Activated naive CD4-positive, alpha-beta T cell treated with anti-CD3 and anti-CD28 coated beads for 36 hours (primary cell): ENCODE measurements at regions of chr10 and their contacts with region 1.

Region 1: GRCh38 chr10:121927841-121928527 is at the start of gene ATE1:
- DNase-seq: peak; percentile 84
- H3K4me3 Mint-ChIP-seq: peak within 1 kb of the TSS; percentile 89
- H3K27ac Mint-ChIP-seq: peak within 1 kb of the TSS; percentile 94
- H3K4me1 Mint-ChIP-seq: peaks cover 21% of the 10 kb centered on the region
- H3K27me3 Mint-ChIP-seq: no peaks in the 10 kb centered on the region
- total RNA-seq, gene ATE1: 13.6 to 17.5 TPM

Region 2: GRCh38 chr10:120850911-120851865 is 1076.8 kb before region 1 on chr10 and contains the start of gene WDR11:
- CTCF ChIA-PET with region 1: no interaction called
- intact Hi-C with region 1: loop called (anchors 1 kb)
- DNase-seq: peak; percentile 80
- H3K4me3 Mint-ChIP-seq: peak within 1 kb of the TSS; percentile 99
- H3K27ac Mint-ChIP-seq: peak within 1 kb of the TSS; percentile 93
- H3K4me1 Mint-ChIP-seq: peaks cover 42% of the 10 kb centered on the region
- H3K27me3 Mint-ChIP-seq: no peaks in the 10 kb centered on the region
- total RNA-seq, gene WDR11: 32.4 to 33.6 TPM

Region 3: GRCh38 chr10:121974535-121975294 is 46.7 kb after region 1 on chr10 and contains the start of gene NSMCE4A:
- CTCF ChIA-PET with region 1: no interaction called
- intact Hi-C with region 1: loop called (anchors 1 kb)
- DNase-seq: peak; percentile 76
- H3K4me3 Mint-ChIP-seq: peak within 1 kb of the TSS; percentile 76
- H3K27ac Mint-ChIP-seq: no peak within 1 kb of the TSS
- H3K4me1 Mint-ChIP-seq: peaks cover 24% of the 10 kb centered on the region
- H3K27me3 Mint-ChIP-seq: no peaks in the 10 kb centered on the region
- total RNA-seq, gene NSMCE4A: 47.5 to 48.8 TPM

Region 4: DNA sequence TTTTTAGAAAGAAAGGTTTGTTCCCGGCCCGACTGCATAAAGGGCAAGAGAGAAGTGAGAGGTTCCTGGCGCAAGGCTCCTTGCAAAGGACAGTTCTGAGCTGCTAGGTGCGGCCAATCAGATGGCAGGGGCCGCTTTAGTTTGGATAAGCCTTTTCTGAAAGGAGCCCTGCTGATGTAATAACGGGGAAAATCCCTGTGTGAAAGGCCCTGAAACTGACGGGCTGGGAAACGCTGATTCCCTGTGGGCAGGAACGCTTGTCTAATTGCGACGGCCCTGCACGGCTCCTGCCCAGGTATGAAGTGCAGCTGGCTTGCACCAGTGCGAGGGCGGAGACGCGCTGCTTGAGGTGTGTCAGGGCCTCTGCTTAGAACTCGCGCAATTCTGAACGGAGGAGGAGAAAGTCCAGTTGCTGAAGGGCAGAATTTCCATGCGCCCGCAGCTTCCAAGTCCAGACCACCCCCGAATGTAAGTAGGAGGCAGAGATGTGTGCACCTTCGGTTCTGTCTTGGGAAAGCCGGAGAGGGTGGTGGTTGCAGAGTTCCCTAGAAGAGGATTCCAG is 91.5 kb after region 1 on chr10:
- CTCF ChIA-PET with region 1: no interaction called
- intact Hi-C with region 1: no loop called
- DNase-seq: no peak
- H3K4me3 Mint-ChIP-seq: no peak overlapping the region
- H3K27ac Mint-ChIP-seq: no peak overlapping the region
- H3K4me1 Mint-ChIP-seq: no peaks in the 10 kb centered on the region
- H3K27me3 Mint-ChIP-seq: peaks cover 10% of the 10 kb centered on the region

Region 5: GRCh38 chr10:122402548-122403131 is 474.7 kb after region 1 on chr10:
- CTCF ChIA-PET with region 1: no interaction called
- intact Hi-C with region 1: no loop called
- DNase-seq: no peak
- H3K4me3 Mint-ChIP-seq: no peak overlapping the region
- H3K27ac Mint-ChIP-seq: no peak overlapping the region
- H3K4me1 Mint-ChIP-seq: peaks cover 32% of the 10 kb centered on the region
- H3K27me3 Mint-ChIP-seq: no peaks in the 10 kb centered on the region

Region 6: GRCh38 chr10:122953827-122954730 is 1026.1 kb after region 1 on chr10 and contains the start of gene C10orf88:
- CTCF ChIA-PET with region 1: no interaction called
- intact Hi-C with region 1: loop called (anchors 5 kb)
- DNase-seq: peak; percentile 97
- H3K4me3 Mint-ChIP-seq: peak within 1 kb of the TSS; percentile 81
- H3K27ac Mint-ChIP-seq: peak within 1 kb of the TSS; percentile 82
- H3K4me1 Mint-ChIP-seq: peaks cover 28% of the 10 kb centered on the region
- H3K27me3 Mint-ChIP-seq: no peaks in the 10 kb centered on the region
- total RNA-seq, gene C10orf88: 4.2 to 5.2 TPM